ENCODE measurements at regions of chr5 and their contacts with region 1.

Region 1: GRCh38 chr5:90264689-90265544 is 144.6 kb downstream of the CETN3 start:
- DNase-seq: peak; percentile 72
- ATAC-seq: peak; percentile 53
- H3K4me3 Mint-ChIP-seq: no peak overlapping the region
- H3K27ac Mint-ChIP-seq: no peak overlapping the region
- H3K4me1 Mint-ChIP-seq: no peaks in the 10 kb centered on the region
- H3K27me3 Mint-ChIP-seq: peaks cover 8% of the 10 kb centered on the region

Region 2: DNA sequence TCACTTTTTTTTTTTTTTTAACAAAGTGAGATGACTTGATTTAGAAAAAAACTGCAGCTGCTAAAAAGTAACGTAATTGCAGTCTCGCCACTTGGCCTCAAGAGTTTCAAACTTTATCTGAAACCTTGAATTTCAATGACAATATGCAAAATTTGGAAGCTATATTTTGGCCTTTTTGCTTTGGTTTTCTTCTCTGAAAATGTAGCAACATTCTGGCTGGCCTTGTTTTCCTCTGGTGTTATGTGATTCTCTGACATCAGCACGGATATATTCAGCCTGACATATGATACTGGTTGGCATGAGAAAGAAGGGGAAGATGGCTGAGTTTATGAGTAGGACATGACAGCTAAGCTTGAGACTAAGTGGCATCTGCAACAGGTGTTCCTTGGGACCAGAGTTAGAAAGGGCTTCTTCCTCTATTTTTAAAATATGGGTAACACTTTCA is 1518.5 kb before region 1 on chr5:
- CTCF ChIA-PET with region 1: no interaction called
- POLR2A ChIA-PET with region 1: no interaction called
- intact Hi-C with region 1: no loop called
- DNase-seq: no peak
- ATAC-seq: no peak
- H3K4me3 Mint-ChIP-seq: no peak overlapping the region
- H3K27ac Mint-ChIP-seq: no peak overlapping the region
- H3K4me1 Mint-ChIP-seq: peaks cover 3% of the 10 kb centered on the region
- H3K27me3 Mint-ChIP-seq: peaks cover 8% of the 10 kb centered on the region

Region 3: DNA sequence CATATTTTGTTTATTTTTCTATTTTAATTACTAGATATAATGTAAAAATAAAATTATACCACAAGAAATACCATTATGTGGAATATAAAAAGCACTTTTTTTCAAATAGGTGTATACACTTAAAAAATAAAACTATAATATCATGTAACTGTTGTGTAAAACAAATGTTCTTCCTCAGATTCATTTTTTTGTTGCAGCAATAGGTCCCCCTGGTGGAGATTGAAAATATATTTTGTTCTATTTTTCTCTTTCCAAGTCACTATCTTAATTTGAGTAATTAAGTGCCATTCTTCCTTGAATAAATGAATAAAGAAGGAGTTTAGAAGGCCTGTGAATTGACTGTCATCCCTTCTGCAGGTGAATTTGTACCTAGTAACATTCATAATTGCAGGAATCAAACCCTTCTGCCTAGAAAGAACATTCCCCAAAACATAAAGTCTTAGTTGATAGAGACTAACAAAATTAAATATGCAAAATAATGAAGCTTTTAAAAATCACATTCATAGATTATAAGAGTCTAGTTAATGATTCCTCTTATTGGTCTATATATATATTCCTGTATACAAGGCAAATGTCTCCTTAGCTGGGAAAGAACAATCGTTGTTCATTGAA is 121.3 kb after region 1 on chr5:
- CTCF ChIA-PET with region 1: interaction called, 4 read pairs
- POLR2A ChIA-PET with region 1: no interaction called
- intact Hi-C with region 1: loop called in 1 of 2 experiments (anchors 5 kb)
- DNase-seq: no peak
- ATAC-seq: no peak
- H3K4me3 Mint-ChIP-seq: no peak overlapping the region
- H3K27ac Mint-ChIP-seq: no peak overlapping the region
- H3K4me1 Mint-ChIP-seq: peaks cover 7% of the 10 kb centered on the region
- H3K27me3 Mint-ChIP-seq: no peaks in the 10 kb centered on the region